ENCODE measurements at regions of chr6 and their contacts with region 1.

Region 1: GRCh38 chr6:6547110-6547879 is 41.2 kb upstream of the LY86 start:
- DNase-seq: peak; percentile 79
- H3K4me3 ChIP-seq: no peak overlapping the region
- H3K27ac ChIP-seq: no peak overlapping the region
- H3K4me1 ChIP-seq: no peaks in the 10 kb centered on the region
- H3K27me3 ChIP-seq: peaks cover 7% of the 10 kb centered on the region; the same call in 1 of the 2 replicates

Region 2: DNA sequence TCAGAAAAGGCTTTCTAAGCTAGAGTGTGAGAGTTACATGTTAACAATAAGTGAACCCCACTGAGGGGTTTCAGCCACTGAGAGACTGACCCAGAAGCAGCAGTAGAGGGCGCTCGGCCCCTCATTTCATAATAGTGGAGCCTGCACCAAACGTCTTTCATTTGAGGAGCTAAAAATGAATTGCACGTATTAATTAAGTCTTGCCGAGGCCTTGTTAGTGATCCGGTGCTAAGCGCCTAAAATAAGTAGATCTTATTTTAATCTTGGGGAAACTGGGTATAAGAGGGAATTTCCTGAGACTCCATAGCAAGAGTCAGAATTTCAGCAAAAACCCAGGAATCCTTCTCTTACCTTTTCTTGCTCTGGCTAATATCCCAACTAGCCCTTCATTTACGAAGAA is 1076.3 kb before region 1 on chr6:
- in situ Hi-C with region 1: loop called (anchors 25 kb)
- DNase-seq: peak; percentile 83
- H3K4me3 ChIP-seq: 0 out of 2 replicates have a peak overlapping the region, but pooled peaks have one; percentile 5
- H3K27ac ChIP-seq: no peak overlapping the region
- H3K4me1 ChIP-seq: peaks cover 32% of the 10 kb centered on the region
- H3K27me3 ChIP-seq: no peaks in the 10 kb centered on the region

Region 3: DNA sequence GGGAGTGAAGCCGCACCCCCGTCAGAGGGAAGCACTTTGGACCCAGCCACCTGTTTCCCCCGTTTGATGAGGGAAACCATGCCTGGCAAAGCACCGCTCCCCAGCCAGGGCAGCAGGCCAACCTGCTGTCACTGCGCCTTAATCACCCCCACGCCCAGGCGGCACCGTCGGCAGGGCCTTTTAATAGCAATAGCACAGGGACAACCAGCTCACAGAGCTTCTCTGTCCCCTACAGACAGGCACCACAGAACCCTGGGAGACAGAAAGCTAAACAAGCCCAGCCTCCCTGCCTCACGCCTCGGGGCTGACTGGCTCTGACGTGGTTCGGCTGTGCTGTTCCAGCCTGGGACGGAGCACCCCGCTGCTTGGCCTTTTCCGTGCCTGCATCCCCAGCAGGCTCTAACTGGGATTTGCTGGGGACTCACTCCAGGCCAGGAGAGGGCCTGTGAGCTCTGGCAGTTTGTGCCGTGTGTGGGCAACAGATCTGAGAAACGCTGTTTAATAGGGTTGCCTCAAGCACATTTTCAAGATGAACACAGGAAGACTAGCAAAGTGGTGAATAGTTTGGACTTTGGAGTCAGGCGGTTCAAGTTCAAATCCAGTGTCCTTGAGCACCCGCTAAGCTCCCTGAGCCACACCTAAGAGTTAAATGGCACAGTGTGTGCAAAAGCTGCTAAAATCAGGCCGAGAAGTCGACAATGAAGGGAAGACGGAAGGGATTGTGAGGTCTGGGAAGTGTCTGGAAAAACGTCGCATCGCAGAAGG is 764.3 kb before region 1 on chr6:
- in situ Hi-C with region 1: no loop called
- DNase-seq: peak; percentile 52
- H3K4me3 ChIP-seq: no peak overlapping the region
- H3K27ac ChIP-seq: no peak overlapping the region
- H3K4me1 ChIP-seq: no peaks in the 10 kb centered on the region
- H3K27me3 ChIP-seq: no peaks in the 10 kb centered on the region

Region 4: DNA sequence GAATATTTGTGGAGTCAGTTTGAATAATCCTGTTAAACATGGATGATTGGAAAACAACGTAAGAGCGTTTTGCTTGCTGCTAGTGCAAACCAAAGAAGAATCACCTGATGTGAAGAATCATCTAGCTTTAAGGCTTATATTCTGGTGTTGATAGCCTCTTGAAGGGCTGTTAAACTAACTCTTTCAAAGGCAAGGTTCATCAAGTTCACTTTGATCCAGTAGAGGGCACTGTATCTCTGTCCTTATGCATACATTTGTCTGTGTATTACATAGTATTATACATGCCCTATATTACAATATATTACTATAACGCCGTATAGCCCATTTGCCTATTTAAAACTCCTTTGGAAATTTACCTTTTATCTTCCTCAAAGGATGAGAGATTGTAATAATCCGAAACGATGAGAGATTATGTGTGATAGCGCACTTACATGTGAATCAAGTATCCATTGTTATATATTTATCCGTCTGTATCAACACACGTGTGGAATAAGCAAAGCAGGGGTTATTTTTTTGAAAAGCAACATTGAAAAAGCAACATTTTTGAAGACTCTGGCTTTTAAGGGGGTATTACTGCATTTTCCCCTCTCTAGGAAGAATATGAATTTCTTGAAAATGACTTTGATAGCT is 489.8 kb before region 1 on chr6:
- in situ Hi-C with region 1: loop called (anchors 25 kb)
- DNase-seq: peak; percentile 57
- H3K4me3 ChIP-seq: no peak overlapping the region
- H3K27ac ChIP-seq: no peak overlapping the region
- H3K4me1 ChIP-seq: no peaks in the 10 kb centered on the region
- H3K27me3 ChIP-seq: peaks cover 10% of the 10 kb centered on the region